ENCODE measurements at regions of chr17 and their contacts with region 1.

Region 1: DNA sequence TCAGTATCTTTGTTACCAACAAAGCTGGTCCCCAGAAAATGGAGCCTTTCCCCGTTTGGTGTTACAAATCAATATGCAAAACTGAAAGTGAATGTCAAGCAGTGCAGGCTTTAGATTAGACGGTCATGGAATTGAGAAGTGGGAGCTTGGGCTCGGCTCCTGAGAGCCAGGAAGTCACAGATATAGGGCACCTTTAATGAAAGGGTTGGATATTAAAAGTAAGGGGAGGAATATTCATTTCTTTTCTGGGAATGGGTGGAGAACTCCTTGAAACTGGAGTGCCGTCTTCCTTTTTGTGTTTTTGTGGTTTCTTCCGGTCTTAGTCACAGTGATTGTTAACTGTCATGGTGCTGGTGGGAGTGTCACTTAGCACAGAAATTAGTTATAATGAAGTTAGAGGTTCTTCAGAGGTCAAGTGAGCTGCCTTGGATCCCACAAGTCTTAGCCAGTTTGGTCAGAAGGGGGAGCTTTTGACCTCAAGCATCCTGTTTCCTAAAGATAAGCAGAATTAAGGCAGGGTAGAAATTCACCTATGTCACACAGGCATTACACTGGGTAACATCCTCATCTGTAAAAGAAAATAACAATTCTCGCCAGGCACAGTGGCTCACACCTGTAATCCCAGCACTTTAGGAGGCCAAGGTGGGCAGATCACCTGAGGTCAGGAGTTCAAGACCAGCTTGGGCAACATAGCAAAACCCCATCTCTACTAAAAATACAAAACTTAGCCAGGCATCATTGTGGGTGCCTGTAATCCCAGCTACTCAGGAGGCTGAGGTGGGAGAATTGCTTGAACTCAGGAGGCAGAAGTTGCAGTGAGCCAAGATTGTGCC is 9.6 kb upstream of the EIF1 start:
- DNase-seq: peak; percentile 84
- ATAC-seq: peak; percentile 82
- H3K4me3 ChIP-seq: peak overlapping the region; percentile 51
- H3K27ac ChIP-seq: peak overlapping the region; percentile 88
- H3K4me1 ChIP-seq: peaks cover 7% of the 10 kb centered on the region
- H3K27me3 ChIP-seq: no peaks in the 10 kb centered on the region
- CTCF ChIP-seq: peak; percentile 29 to 63 (median 33); a peak in 4 of 6 replicates
- EP300 ChIP-seq: no peak
- POLR2A ChIP-seq: no peak
- RAD21 ChIP-seq: peak; percentile 51; the same call in 1 of the 2 replicates

Region 2: GRCh38 chr17:40317880-40318829 is 1361.0 kb before region 1 on chr17:
- CTCF ChIA-PET with region 1: no interaction called
- POLR2A ChIA-PET with region 1: no interaction called
- RAD21 ChIA-PET with region 1: no interaction called
- SMC1A ChIA-PET with region 1: no interaction called
- in situ Hi-C with region 1: loop called (anchors 10 kb)
- intact Hi-C with region 1: loop called (anchors 5 kb)
- DNase-seq: peak; percentile 79
- ATAC-seq: peak; percentile 83
- H3K4me3 ChIP-seq: peak overlapping the region; percentile 91
- H3K27ac ChIP-seq: peak overlapping the region; percentile 96
- H3K4me1 ChIP-seq: peaks cover 44% of the 10 kb centered on the region
- H3K27me3 ChIP-seq: no peaks in the 10 kb centered on the region
- CTCF ChIP-seq: no peak
- EP300 ChIP-seq: no peak; a peak in 1 of 4 replicates
- POLR2A ChIP-seq: peak; percentile 79
- RAD21 ChIP-seq: no peak

Region 3: DNA sequence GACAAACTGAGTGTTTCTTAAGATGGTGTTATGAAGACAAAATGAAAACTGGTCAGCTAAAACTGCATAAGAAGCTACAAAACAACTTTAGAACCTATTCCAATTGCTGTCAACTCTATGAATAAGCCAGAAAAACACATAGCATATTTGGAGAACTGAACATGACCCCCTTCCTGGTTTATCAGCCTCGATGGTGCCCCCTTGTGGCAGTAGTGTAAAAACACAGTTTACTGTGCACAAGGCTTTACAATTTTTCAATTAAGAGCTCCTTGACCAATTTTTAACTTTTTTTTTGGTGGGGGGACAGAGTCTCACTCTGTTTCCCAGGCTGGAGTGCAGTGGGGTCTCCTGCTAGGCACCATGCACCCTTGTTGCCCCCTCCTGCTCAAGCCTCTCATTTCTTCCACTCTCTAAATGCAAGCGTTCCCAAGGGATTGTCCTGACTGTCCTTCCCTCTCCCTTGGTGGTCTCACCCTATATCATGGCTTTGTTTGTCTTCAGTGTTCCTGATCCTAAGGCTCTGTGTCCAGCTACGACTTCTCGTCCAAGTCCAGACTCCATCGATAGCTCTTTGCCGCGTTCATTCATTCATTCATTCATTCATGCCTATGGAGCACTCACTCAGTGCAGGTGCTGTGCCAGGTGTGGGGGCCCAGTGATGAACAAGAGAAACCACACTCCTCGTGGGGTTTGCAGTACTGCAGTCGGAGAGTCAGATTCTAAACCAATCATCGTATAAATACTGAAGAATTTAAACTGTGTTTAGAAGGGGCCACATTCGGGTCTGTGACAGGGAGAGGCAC is 17.0 kb after region 1 on chr17:
- CTCF ChIA-PET with region 1: interaction called, 265 read pairs
- POLR2A ChIA-PET with region 1: interaction called, 177 read pairs
- RAD21 ChIA-PET with region 1: interaction called, 38 read pairs
- SMC1A ChIA-PET with region 1: interaction called, 122 read pairs
- in situ Hi-C with region 1: no loop called
- intact Hi-C with region 1: no loop called
- DNase-seq: no peak
- ATAC-seq: peak; percentile 66
- H3K4me3 ChIP-seq: no peak overlapping the region
- H3K27ac ChIP-seq: no peak overlapping the region
- H3K4me1 ChIP-seq: peaks cover 2% of the 10 kb centered on the region; the same call in 1 of the 2 replicates
- H3K27me3 ChIP-seq: no peaks in the 10 kb centered on the region
- CTCF ChIP-seq: peak; percentile 73 to 91 (median 76)
- EP300 ChIP-seq: no peak
- POLR2A ChIP-seq: no peak
- RAD21 ChIP-seq: peak; percentile 59

Measured in GM12878 (cell line).